IMR-90 (cell line): ENCODE measurements at regions of chr10 and their contacts with region 1.

Region 1: DNA sequence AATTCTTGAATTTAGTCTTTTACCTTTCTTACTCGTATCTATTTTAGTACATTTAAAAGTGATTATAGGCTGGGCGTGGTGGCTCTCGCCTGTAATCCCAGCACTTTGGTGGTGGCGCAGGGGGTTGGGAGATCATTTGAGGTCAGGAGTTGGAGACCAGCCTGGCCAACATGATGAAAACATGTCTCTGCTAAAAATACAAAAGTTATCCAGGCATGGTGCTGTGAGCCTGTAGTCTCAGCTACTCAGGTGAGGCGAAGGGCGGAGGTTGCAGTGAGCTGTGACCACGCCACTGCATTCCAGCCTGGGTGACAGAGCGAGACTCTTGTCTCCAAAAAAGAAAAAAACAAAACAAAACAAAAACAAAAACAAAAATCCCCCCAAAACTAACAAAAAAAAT is 12.2 kb downstream of the PRKCQ start:
- DNase-seq: no peak
- ATAC-seq: no peak
- H3K4me3 ChIP-seq: no peak overlapping the region
- H3K27ac ChIP-seq: no peak overlapping the region
- H3K4me1 ChIP-seq: no peaks in the 10 kb centered on the region
- H3K27me3 ChIP-seq: peaks cover 4% of the 10 kb centered on the region; the same call in 1 of the 2 replicates
- CTCF ChIP-seq: no peak
- POLR2A ChIP-seq: no peak
- RAD21 ChIP-seq: no peak

Region 2: DNA sequence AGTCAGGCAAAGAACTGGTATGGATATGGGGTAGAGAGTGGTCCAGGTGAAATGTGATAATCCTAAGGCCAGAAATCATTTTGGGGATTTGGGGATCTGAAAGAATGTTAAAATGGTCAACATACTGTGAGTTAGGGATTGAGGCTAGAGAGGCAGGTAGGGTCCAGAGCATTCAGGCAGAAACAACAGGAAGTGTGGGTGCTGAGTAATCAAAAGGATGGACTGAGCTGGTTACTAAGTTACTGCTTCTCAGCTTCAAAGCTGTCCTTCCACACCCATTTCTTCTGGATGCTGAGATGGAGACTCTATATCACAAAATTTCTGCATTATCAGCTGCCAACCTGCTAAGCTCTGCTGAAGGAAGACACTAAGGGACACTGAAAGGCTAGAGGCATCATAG is 42.8 kb after region 1 on chr10:
- CTCF ChIA-PET with region 1: no interaction called
- POLR2A ChIA-PET with region 1: no interaction called
- dilution Hi-C with region 1: no loop called
- in situ Hi-C with region 1: no loop called
- intact Hi-C with region 1: loop called (anchors 1 kb)
- DNase-seq: no peak
- ATAC-seq: no peak
- H3K4me3 ChIP-seq: no peak overlapping the region
- H3K27ac ChIP-seq: no peak overlapping the region
- H3K4me1 ChIP-seq: no peaks in the 10 kb centered on the region
- H3K27me3 ChIP-seq: no peaks in the 10 kb centered on the region
- CTCF ChIP-seq: no peak
- POLR2A ChIP-seq: no peak
- RAD21 ChIP-seq: no peak